Calu3 (cell line): ENCODE measurements at regions of chr6 and their contacts with region 1.

Region 1: GRCh38 chr6:70107852-70108629 is 194.8 kb downstream of the COL9A1 start:
- DNase-seq: peak; percentile 46
- H3K4me3 Mint-ChIP-seq: no peak overlapping the region
- H3K27ac Mint-ChIP-seq: no peak overlapping the region
- H3K4me1 Mint-ChIP-seq: no peaks in the 10 kb centered on the region
- H3K27me3 Mint-ChIP-seq: peaks cover 21% of the 10 kb centered on the region
- CTCF ChIP-seq: peak; percentile 71

Region 2: GRCh38 chr6:68967549-68968300 is 1140.3 kb before region 1 on chr6:
- CTCF ChIA-PET with region 1: no interaction called
- intact Hi-C with region 1: loop called (anchors 10 kb)
- DNase-seq: peak; percentile 72
- H3K4me3 Mint-ChIP-seq: no peak overlapping the region
- H3K27ac Mint-ChIP-seq: no peak overlapping the region
- H3K4me1 Mint-ChIP-seq: peaks cover 11% of the 10 kb centered on the region
- H3K27me3 Mint-ChIP-seq: no peaks in the 10 kb centered on the region
- CTCF ChIP-seq: peak; percentile 84

Region 3: GRCh38 chr6:69732640-69733039 is 375.4 kb before region 1 on chr6:
- CTCF ChIA-PET with region 1: interaction called, 3 read pairs
- intact Hi-C with region 1: loop called (anchors 1 kb)
- DNase-seq: no peak
- H3K4me3 Mint-ChIP-seq: no peak overlapping the region
- H3K27ac Mint-ChIP-seq: no peak overlapping the region
- H3K4me1 Mint-ChIP-seq: no peaks in the 10 kb centered on the region
- H3K27me3 Mint-ChIP-seq: no peaks in the 10 kb centered on the region
- CTCF ChIP-seq: peak; percentile 15

Region 4: DNA sequence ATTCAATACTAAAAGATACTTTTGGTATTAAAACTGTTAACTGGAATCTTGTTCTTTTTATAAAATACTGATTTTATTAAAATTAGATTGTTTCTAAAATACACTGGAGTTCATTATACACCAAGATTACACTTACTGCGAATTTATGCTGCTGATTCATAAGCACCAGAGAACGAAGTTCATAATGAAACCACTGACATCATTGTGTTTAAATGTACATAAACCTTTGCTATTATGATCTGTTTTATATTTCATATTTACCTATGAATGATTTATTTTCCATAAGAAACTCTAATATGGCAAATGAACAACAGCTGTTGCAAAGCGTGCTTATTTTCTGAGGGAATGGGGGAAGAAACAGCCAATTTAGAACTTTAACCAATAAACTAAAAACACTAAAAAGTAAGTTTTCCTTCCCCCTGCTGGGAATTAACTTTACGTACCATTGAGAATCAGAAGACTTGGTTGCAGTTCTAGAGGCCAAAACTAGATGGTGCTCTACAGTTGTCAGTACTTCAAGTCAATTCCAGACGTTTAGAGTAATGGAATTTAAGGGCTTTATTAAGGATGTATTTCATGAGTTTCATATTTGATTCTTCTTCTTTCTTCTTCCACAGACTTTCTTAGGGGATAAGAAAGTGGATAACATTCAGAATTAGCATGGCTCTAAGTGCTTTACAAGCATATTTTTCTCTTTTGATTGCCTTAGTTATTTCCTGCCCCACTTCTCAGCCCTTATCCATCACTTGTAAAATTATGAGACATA is 272.4 kb before region 1 on chr6:
- CTCF ChIA-PET with region 1: interaction called, 3 read pairs
- intact Hi-C with region 1: loop called (anchors 1 kb)
- DNase-seq: peak; percentile 27
- H3K4me3 Mint-ChIP-seq: no peak overlapping the region
- H3K27ac Mint-ChIP-seq: no peak overlapping the region
- H3K4me1 Mint-ChIP-seq: no peaks in the 10 kb centered on the region
- H3K27me3 Mint-ChIP-seq: no peaks in the 10 kb centered on the region
- CTCF ChIP-seq: peak; percentile 63

Region 5: DNA sequence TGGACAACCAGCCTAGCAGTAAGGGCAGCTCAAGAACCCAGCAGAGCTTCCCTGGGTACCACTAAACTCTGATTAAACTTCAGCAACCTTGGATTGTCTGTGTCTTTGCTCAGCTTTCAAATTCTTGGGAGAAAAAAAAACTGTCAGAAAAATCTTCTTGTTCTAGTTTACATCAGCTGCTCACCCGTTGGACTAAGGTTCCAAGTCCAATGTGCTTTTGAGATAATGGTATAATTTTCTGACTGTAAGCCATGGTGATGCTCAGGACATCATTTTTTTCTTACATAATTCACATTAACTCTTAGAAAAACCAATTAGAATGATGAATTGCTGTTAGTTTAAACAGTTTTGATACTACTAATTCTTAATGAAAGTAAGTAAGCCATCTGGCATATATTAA is 49.0 kb after region 1 on chr6:
- CTCF ChIA-PET with region 1: no interaction called
- intact Hi-C with region 1: no loop called
- DNase-seq: no peak
- H3K4me3 Mint-ChIP-seq: no peak overlapping the region
- H3K27ac Mint-ChIP-seq: no peak overlapping the region
- H3K4me1 Mint-ChIP-seq: no peaks in the 10 kb centered on the region
- H3K27me3 Mint-ChIP-seq: peaks cover 38% of the 10 kb centered on the region
- CTCF ChIP-seq: no peak

Region 6: DNA sequence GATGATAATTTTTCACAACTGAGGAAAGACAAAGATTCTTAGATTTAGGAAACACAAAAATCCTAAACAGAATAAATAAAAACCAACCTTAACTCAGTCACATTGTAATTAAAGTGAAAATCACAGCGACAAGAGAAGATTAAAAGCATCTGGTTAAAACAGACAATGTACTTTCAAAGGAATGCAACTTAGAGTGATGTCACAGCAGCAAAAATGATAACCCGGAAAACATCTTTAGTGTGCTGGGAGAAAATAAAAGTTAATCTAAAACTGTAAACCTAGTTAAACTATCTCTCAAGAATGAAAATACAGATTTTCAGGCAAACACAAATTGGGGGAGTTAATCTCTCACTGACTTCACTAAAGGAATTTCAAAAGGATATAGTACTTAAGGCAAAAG is 1103.8 kb after region 1 on chr6:
- CTCF ChIA-PET with region 1: no interaction called
- intact Hi-C with region 1: no loop called
- DNase-seq: no peak
- H3K4me3 Mint-ChIP-seq: no peak overlapping the region
- H3K27ac Mint-ChIP-seq: no peak overlapping the region
- H3K4me1 Mint-ChIP-seq: no peaks in the 10 kb centered on the region
- H3K27me3 Mint-ChIP-seq: no peaks in the 10 kb centered on the region
- CTCF ChIP-seq: no peak